ENCODE measurements at regions of chr4 and their contacts with region 1.

Region 1: DNA sequence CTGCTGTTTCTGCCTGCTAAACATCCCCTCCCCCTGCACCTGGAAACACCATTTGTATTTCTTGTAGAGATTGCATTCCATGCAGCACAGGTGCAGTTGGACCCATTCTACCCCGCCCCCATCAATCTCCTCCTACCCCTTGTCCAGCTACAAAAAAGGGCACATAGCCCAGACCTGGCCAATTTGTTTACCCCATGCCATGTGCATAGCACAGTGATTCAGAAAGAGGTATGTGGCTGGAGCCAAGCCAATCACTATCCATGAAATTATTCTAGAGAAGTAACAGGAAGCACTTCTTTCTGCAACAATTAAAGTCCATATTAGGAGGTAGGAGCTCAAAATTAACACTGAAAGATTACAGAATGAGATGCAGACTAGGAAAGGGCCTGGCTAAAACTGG is 20.2 kb upstream of the TMEM184C start:
- DNase-seq: peak; percentile 76
- H3K4me3 ChIP-seq: no peak overlapping the region
- H3K27ac ChIP-seq: no peak overlapping the region
- H3K4me1 ChIP-seq: peaks cover 4% of the 10 kb centered on the region
- H3K27me3 ChIP-seq: peaks cover 0 to 3% of the 10 kb centered on the region in 2 experiments
- CTCF ChIP-seq: no peak
- POLR2A ChIP-seq: no peak

Region 2: GRCh38 chr4:147160908-147161513 is 436.0 kb before region 1 on chr4:
- CTCF ChIA-PET with region 1: interaction called, 15 read pairs
- POLR2A ChIA-PET with region 1: no interaction called
- dilution Hi-C with region 1: no loop called
- intact Hi-C with region 1: no loop called
- DNase-seq: peak; percentile 53
- H3K4me3 ChIP-seq: no peak overlapping the region
- H3K27ac ChIP-seq: no peak overlapping the region
- H3K4me1 ChIP-seq: peaks cover 4% of the 10 kb centered on the region
- H3K27me3 ChIP-seq: peaks cover 0 to 14% of the 10 kb centered on the region in 2 experiments
- CTCF ChIP-seq: peak; percentile 65 to 71
- POLR2A ChIP-seq: no peak

Region 3: DNA sequence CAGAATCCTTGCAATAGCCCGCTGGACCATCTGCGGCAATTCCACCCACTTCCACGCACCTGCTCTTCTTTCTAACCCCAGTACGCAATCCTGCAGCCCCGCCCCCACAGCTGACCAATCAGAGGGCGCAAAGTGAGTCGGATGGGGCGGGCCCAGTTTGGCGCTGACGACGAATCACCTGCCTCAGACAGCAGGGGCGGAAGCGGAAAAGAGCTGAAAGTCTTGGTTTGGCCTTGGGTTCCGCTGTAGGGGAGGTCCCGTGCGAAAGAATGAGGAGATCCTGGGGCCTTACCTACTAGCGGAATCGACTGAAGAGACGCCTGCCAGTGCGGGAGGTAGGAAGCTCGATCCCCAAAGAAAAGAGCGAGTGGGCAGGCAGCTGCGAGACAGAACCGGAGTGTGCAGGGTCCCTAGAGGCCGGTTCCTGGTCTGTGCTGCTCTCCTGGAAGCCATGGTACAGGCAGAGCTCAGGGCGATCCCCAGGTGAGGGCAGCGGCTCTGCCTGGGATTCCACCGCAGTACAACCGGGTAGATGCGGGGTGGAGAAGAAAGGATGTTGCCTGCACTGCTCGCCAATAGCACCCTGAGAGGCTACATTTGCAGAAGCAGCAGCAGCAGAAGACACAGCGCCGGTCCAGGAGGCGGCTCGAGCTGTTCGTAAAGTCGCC is 20.3 kb after region 1 on chr4 and contains the start of gene TMEM184C:
- CTCF ChIA-PET with region 1: interaction called, 11 read pairs
- POLR2A ChIA-PET with region 1: no interaction called
- dilution Hi-C with region 1: no loop called
- intact Hi-C with region 1: no loop called
- DNase-seq: peak; percentile 96
- H3K4me3 ChIP-seq: peak within 1 kb of the TSS; percentile 30 to 93 (median 90)
- H3K27ac ChIP-seq: peak within 1 kb of the TSS; percentile 48
- H3K4me1 ChIP-seq: peaks cover 9% of the 10 kb centered on the region
- H3K27me3 ChIP-seq: peaks cover 8 to 12% of the 10 kb centered on the region in 2 experiments
- CTCF ChIP-seq: peak in 1 of 2 donors; percentile 16
- POLR2A ChIP-seq: peak; percentile 84
- total RNA-seq, gene TMEM184C: 27.1 and 29.2 TPM in 2 replicates

Measured in endothelial cell of umbilical vein (primary cell).